ENCODE measurements at regions of chr15 and their contacts with region 1.

Region 1: DNA sequence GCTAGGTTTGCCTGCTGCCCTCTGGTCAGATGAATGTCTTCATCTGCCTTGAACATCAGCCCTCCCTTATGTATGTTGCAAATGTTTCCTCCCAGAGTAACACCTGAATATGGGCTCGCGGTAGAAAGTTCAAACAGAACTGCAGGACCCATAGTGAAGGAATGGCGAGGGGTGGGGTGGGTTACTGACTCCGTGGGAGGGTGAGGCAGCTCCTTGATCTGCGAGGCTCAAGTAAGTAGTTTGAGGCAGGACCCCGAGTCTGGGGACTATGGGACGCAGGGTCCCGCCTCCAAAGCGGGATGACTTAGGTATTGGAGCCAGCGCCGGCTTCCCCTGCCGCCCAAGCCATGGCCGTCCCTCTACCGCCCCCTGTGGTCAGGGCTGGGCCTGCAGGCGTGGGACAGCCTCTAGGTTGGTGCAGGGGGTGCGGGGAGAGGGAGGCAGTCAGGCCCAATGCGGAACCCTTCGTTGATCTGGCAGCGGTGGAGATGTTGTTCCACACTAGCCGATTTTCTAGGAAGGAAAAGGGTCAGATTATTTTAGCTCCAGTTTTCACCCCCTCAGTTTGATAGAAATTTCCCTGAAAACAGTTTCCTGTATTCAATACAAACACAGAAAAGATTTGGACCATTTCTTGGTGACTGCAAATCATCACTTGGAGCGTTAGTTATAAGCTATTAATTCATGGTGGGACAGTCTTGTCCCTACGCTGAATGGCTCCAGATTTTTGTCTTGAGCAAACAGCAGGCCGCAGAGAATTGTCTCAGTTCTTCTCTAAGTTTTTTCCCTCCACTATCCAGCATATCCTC is 72.3 kb downstream of the CORO2B start:
- DNase-seq: peak; percentile 98
- ATAC-seq: peak; percentile 96
- H3K4me3 Mint-ChIP-seq: peak overlapping the region; percentile 53
- H3K27ac Mint-ChIP-seq: no peak overlapping the region; the same call in 1 of the 2 replicates
- H3K4me1 Mint-ChIP-seq: peaks cover 43% of the 10 kb centered on the region
- H3K27me3 Mint-ChIP-seq: no peaks in the 10 kb centered on the region
- CTCF ChIP-seq: peak; percentile 97

Region 2: GRCh38 chr15:68550481-68551295 is 100.4 kb before region 1 on chr15:
- CTCF ChIA-PET with region 1: interaction called, 48 read pairs
- POLR2A ChIA-PET with region 1: no interaction called
- DNase-seq: peak; percentile 94
- ATAC-seq: peak; percentile 79
- H3K4me3 Mint-ChIP-seq: no peak overlapping the region
- H3K27ac Mint-ChIP-seq: no peak overlapping the region
- H3K4me1 Mint-ChIP-seq: no peaks in the 10 kb centered on the region
- H3K27me3 Mint-ChIP-seq: peaks cover 10% of the 10 kb centered on the region
- CTCF ChIP-seq: peak; percentile 94

Region 3: DNA sequence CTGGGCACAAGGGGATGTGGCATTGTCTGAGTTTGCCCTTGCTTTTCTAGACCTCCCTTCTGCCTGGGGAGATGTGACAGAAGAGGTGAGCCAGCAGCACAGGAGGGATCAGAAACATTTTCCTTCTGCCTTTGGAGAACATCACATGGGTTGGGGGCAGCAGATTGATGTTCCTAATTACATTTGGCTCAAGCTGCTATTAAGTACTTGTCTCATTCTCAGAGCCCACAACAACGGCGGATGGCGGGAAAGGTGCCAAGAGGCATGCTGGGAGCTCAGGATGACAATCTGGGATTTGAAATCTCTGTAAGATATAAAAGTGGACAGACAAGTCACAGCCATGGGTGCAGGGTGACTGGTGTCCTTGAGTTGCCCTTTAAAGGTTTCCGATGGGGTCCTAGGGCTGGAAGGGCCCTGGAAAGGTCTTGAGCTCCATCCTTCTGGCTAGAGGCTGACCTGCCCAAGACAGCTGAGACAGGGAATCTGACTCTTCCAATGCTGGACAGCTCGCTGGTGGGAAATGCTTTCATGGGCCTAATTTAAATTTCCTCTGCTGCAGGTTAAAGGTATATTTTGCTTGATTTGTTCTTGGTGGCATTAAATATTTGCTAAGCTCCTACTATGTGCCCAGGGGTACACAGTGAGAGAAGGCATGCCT is 74.7 kb before region 1 on chr15:
- CTCF ChIA-PET with region 1: interaction called, 17 read pairs
- POLR2A ChIA-PET with region 1: no interaction called
- DNase-seq: no peak
- ATAC-seq: no peak
- H3K4me3 Mint-ChIP-seq: no peak overlapping the region
- H3K27ac Mint-ChIP-seq: no peak overlapping the region
- H3K4me1 Mint-ChIP-seq: peaks cover 61% of the 10 kb centered on the region
- H3K27me3 Mint-ChIP-seq: peaks cover 51% of the 10 kb centered on the region
- CTCF ChIP-seq: no peak

Region 4: GRCh38 chr15:68623301-68623892 is 27.7 kb before region 1 on chr15:
- CTCF ChIA-PET with region 1: interaction called, 10 read pairs
- POLR2A ChIA-PET with region 1: no interaction called
- DNase-seq: no peak
- ATAC-seq: no peak
- H3K4me3 Mint-ChIP-seq: no peak overlapping the region
- H3K27ac Mint-ChIP-seq: no peak overlapping the region
- H3K4me1 Mint-ChIP-seq: peaks cover 24% of the 10 kb centered on the region
- H3K27me3 Mint-ChIP-seq: no peaks in the 10 kb centered on the region
- CTCF ChIP-seq: no peak

Region 5: GRCh38 chr15:68637767-68638404 is 13.2 kb before region 1 on chr15:
- CTCF ChIA-PET with region 1: interaction called, 21 read pairs
- POLR2A ChIA-PET with region 1: interaction called, 3 read pairs
- DNase-seq: no peak
- ATAC-seq: no peak
- H3K4me3 Mint-ChIP-seq: no peak overlapping the region
- H3K27ac Mint-ChIP-seq: no peak overlapping the region
- H3K4me1 Mint-ChIP-seq: peaks cover 40% of the 10 kb centered on the region
- H3K27me3 Mint-ChIP-seq: no peaks in the 10 kb centered on the region
- CTCF ChIP-seq: no peak

Region 6: DNA sequence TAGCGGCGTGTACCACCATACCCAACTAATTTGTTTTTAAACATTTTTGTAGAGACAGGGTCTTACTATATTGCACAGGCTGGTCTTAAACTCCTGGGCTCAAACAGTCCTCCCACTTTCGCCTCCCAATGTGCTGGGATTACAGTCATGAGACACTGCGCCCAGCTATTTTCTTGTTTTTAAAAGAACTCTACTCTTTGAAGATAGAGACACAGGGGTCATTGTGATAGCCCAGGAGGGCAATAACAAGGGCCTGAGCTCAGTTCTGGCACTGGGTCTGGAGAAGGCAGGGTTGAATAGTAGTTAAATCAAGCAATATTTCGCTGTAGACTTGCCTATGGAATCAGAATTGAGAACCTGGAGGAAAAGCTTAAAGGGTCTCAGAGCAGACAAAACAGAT is 70.8 kb after region 1 on chr15:
- CTCF ChIA-PET with region 1: no interaction called
- POLR2A ChIA-PET with region 1: no interaction called
- DNase-seq: no peak
- ATAC-seq: no peak
- H3K4me3 Mint-ChIP-seq: no peak overlapping the region
- H3K27ac Mint-ChIP-seq: no peak overlapping the region
- H3K4me1 Mint-ChIP-seq: peaks cover 7% of the 10 kb centered on the region
- H3K27me3 Mint-ChIP-seq: no peaks in the 10 kb centered on the region
- CTCF ChIP-seq: no peak

Measured in WTC11 (cell line).